ENCODE measurements at regions of chr7 and their contacts with region 1.

Region 1: DNA sequence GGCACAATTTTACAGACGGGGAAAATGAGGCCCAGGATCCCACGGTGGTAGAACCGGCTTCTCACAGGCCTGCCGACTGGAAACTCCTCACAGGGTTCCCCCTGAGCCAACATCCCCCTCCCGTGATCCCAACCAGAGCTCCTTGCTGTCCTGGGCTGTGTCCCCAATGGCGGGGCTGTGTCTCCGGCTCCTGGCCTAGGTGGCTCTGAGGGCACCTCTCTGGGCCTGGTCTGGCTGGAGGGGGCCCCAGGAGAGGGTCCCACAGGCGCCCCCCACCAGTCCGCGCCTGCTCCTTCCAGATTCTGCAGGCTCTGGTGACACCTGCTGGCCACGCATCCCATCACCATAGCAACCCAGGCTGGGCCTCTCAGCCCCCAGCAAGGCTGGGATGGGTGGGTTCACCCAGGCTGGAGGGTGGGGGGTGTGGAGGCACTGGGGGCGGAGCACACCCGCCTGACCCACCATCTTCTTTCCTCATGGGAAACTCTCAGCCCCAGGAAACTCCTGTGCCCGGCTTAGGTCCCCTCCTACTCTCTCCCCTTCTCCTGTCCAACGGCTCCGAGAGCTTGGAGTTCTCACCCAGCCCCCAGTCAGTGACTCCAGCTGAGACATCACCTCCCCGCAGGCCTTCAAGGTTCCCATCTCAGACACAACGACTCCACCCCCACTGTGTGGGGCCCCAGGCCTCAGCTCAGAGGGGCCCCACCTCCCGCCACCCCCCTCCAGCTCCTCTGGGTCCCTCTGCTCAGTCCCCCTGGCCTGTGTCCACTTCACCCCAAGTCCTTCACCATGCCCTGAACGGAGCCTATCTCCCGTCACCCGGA is 27.1 kb upstream of the TNRC18 start:
- DNase-seq: peak; percentile 49
- H3K4me3 ChIP-seq: no peak overlapping the region
- H3K27ac ChIP-seq: no peak overlapping the region
- H3K4me1 ChIP-seq: peaks cover 0 to 6% (median 0%) of the 10 kb centered on the region in 4 donors
- H3K27me3 ChIP-seq: no peaks in the 10 kb centered on the region
- CTCF ChIP-seq: peak; percentile 62 to 76 (median 67)
- EP300 ChIP-seq: no peak
- POLR2A ChIP-seq: no peak

Region 2: GRCh38 chr7:5231811-5232484 is 218.8 kb before region 1 on chr7:
- in situ Hi-C with region 1: loop called in 2 of 4 experiments (anchors 25 kb)
- intact Hi-C with region 1: loop called (anchors 10 kb)
- DNase-seq: peak; percentile 56
- H3K4me3 ChIP-seq: no peak overlapping the region
- H3K27ac ChIP-seq: peak overlapping the region in 3 of 4 donors; percentile 46 to 63 (median 51)
- H3K4me1 ChIP-seq: peaks cover 0 to 11% (median 0%) of the 10 kb centered on the region in 4 donors
- H3K27me3 ChIP-seq: no peaks in the 10 kb centered on the region
- CTCF ChIP-seq: no peak
- EP300 ChIP-seq: no peak
- POLR2A ChIP-seq: no peak

Region 3: DNA sequence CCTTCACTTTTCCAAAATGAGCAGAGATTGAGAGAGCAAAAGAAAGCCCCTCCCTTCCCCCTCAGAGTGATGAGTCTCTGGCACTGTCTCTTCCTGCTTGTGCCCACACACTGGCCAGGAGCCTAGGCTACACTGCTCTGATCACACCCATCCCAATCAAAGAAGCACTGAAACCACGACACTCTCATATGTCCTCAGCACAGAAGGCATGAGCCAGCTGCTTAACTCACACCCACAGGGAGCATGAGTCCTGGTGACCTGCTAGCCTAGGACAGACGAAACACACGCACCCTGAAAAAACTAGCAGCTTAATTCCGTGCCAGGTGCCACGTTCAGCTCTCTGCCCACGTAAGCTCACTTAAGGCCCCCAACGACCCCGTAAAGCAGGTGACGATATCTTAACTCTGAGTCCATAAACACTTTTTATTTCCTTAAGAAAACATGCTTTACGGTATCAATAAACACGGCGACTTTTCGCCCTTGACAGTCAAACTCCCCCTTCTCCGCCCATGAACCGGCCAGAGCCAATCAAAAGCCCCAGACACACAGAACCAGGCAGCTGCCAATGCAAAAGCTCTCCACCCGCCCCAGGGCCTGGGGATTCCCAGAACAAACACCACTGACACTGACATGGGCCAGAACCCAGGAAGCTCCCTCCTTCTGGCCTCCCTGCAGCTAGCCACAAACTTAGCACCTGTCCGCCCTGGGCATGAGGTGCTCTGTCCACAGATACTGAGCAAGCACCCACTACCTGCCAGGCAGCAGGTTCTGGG is 96.1 kb before region 1 on chr7:
- in situ Hi-C with region 1: loop called in 1 of 4 experiments (anchors 25 kb)
- intact Hi-C with region 1: no loop called
- DNase-seq: peak; percentile 81
- H3K4me3 ChIP-seq: peak overlapping the region in 1 of 4 donors; percentile 6
- H3K27ac ChIP-seq: peak overlapping the region; percentile 73 to 82 (median 76)
- H3K4me1 ChIP-seq: peaks cover 13 to 30% (median 27%) of the 10 kb centered on the region in 4 donors
- H3K27me3 ChIP-seq: no peaks in the 10 kb centered on the region
- CTCF ChIP-seq: no peak
- EP300 ChIP-seq: no peak
- POLR2A ChIP-seq: no peak

Region 4: GRCh38 chr7:5363729-5364128 is 87.0 kb before region 1 on chr7:
- in situ Hi-C with region 1: loop called in 2 of 4 experiments (anchors 10 to 25 kb)
- intact Hi-C with region 1: no loop called
- DNase-seq: no peak
- H3K4me3 ChIP-seq: no peak overlapping the region
- H3K27ac ChIP-seq: no peak overlapping the region
- H3K4me1 ChIP-seq: peaks cover 0 to 17% (median 9%) of the 10 kb centered on the region in 4 donors
- H3K27me3 ChIP-seq: no peaks in the 10 kb centered on the region
- CTCF ChIP-seq: no peak
- EP300 ChIP-seq: no peak
- POLR2A ChIP-seq: no peak